Activated CD4-positive, alpha-beta memory T cell treated with anti-CD3 and anti-CD28 coated beads for 36 hours (primary cell): ENCODE measurements at regions of chr12 and their contacts with region 1.

Region 1: DNA sequence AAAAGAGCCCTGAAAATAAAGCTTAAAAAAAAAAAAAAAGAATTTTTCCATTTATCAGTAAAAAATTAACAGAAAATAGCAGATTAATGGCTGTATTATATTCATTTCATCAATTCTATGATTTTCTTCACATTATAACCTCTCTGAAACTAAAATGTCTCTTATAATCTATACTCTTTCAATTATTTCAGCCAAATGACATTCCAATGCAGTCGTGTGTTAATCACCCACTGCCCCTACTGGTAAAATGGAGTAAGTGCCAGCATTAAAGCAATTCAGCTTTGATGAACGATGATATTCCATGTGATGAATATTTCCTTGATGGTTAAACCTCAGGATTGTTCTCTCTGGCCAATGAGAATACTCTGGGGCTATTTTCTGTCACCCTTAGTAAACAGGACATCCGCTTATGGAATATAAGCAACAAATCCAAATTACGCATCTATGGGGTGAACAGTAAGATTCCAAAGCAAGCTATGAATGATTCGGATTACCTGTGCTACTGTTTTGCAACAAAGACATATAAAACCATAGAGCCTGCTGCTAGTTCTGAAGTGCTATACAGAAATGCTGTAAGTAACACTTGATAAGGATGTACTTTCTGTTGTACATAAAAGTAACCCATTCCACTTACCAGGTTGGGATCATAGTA is 20.3 kb upstream of the SYCP3 start:
- DNase-seq: no peak
- H3K4me3 Mint-ChIP-seq: no peak overlapping the region
- H3K27ac Mint-ChIP-seq: no peak overlapping the region
- H3K4me1 Mint-ChIP-seq: no peaks in the 10 kb centered on the region
- H3K27me3 Mint-ChIP-seq: no peaks in the 10 kb centered on the region

Region 2: GRCh38 chr12:101414533-101415119 is 344.9 kb before region 1 on chr12:
- CTCF ChIA-PET with region 1: interaction called, 18 read pairs
- POLR2A ChIA-PET with region 1: no interaction called
- intact Hi-C with region 1: loop called (anchors 1 kb)
- DNase-seq: no peak
- H3K4me3 Mint-ChIP-seq: no peak overlapping the region
- H3K27ac Mint-ChIP-seq: no peak overlapping the region
- H3K4me1 Mint-ChIP-seq: no peaks in the 10 kb centered on the region
- H3K27me3 Mint-ChIP-seq: no peaks in the 10 kb centered on the region

Region 3: GRCh38 chr12:101490286-101490920 is 269.1 kb before region 1 on chr12:
- CTCF ChIA-PET with region 1: interaction called, 3 read pairs
- POLR2A ChIA-PET with region 1: no interaction called
- intact Hi-C with region 1: loop called (anchors 5 kb)
- DNase-seq: peak; percentile 18
- H3K4me3 Mint-ChIP-seq: no peak overlapping the region
- H3K27ac Mint-ChIP-seq: no peak overlapping the region
- H3K4me1 Mint-ChIP-seq: no peaks in the 10 kb centered on the region
- H3K27me3 Mint-ChIP-seq: no peaks in the 10 kb centered on the region

Region 4: DNA sequence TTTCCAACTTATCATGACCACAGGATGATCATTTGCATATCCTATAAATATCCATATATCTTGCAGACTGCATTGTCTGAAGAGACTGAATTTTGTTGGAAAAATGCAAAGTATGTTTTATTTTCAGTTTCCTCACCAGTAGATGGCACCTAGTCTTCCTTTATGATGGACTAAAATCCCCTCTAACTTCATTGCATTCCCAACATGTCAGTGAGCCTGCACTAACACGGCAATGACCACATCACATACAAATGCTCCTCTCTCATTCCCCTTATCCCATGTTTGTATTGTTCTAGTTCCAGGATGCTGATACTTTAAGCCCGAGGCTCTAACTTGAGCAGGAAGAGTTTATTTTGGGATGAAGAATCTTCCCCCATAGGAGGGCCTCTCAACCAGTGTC is 189.5 kb before region 1 on chr12:
- CTCF ChIA-PET with region 1: interaction called, 3 read pairs
- POLR2A ChIA-PET with region 1: no interaction called
- intact Hi-C with region 1: loop called (anchors 10 kb)
- DNase-seq: no peak
- H3K4me3 Mint-ChIP-seq: no peak overlapping the region
- H3K27ac Mint-ChIP-seq: no peak overlapping the region
- H3K4me1 Mint-ChIP-seq: peaks cover 4% of the 10 kb centered on the region
- H3K27me3 Mint-ChIP-seq: peaks cover 4% of the 10 kb centered on the region

Region 5: GRCh38 chr12:101670007-101670687 is 89.4 kb before region 1 on chr12:
- CTCF ChIA-PET with region 1: interaction called, 6 read pairs
- POLR2A ChIA-PET with region 1: no interaction called
- intact Hi-C with region 1: loop called (anchors 1 kb)
- DNase-seq: peak; percentile 64
- H3K4me3 Mint-ChIP-seq: no peak overlapping the region
- H3K27ac Mint-ChIP-seq: no peak overlapping the region
- H3K4me1 Mint-ChIP-seq: peaks cover 17% of the 10 kb centered on the region
- H3K27me3 Mint-ChIP-seq: peaks cover 9% of the 10 kb centered on the region

Region 6: GRCh38 chr12:101773650-101774162 is 14.2 kb after region 1 on chr12:
- CTCF ChIA-PET with region 1: interaction called, 12 read pairs
- POLR2A ChIA-PET with region 1: no interaction called
- intact Hi-C with region 1: no loop called
- DNase-seq: peak; percentile 72
- H3K4me3 Mint-ChIP-seq: no peak overlapping the region
- H3K27ac Mint-ChIP-seq: no peak overlapping the region
- H3K4me1 Mint-ChIP-seq: peaks cover 6% of the 10 kb centered on the region
- H3K27me3 Mint-ChIP-seq: no peaks in the 10 kb centered on the region

Region 7: DNA sequence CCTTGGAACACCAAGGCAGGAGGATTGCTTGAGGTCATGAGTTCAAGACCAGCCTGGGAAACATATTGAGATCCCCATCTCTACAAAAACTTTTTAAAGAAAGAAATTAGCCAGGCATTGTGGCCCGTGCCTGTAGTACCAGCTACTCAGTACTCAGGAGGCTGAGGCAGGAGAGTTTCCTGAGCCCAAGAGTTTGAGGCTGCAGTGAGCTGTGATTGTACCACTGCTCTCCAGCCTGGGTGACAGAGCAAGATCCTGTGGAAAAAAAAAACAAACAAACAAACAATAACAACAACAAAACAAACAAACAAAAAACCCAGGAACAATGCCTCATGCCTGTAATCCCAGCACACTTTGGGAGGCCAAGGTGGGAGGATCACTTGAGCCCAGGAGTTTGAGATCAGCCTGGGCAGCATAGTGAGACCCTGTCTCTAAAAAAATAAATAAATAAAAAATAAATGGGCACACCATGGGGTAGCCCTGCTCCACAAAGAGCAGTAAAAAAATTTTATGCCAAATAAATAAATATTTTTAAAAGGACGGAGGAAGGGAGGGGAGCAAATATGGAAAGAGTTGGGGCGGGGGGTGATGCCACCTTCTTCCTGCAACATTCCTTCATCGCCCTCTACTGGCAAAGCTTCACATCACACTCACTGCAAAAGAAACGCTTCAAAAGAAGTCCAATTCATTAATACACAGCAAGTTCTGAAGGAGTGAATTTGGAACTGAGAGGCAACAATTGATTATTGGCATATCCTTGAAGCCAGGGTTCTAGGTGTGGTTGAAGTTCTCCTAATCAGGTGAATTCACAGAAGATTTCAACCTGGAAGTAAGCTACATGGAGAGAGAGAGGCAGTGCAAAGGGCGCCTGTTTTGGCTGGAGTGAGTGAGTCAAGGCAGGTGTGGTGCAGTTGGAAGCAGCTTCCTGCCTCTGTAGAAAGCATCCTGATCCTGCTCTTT is 80.1 kb after region 1 on chr12:
- CTCF ChIA-PET with region 1: interaction called, 23 read pairs
- POLR2A ChIA-PET with region 1: no interaction called
- intact Hi-C with region 1: no loop called
- DNase-seq: peak; percentile 74
- H3K4me3 Mint-ChIP-seq: no peak overlapping the region
- H3K27ac Mint-ChIP-seq: no peak overlapping the region
- H3K4me1 Mint-ChIP-seq: peaks cover 10% of the 10 kb centered on the region
- H3K27me3 Mint-ChIP-seq: no peaks in the 10 kb centered on the region

Region 8: DNA sequence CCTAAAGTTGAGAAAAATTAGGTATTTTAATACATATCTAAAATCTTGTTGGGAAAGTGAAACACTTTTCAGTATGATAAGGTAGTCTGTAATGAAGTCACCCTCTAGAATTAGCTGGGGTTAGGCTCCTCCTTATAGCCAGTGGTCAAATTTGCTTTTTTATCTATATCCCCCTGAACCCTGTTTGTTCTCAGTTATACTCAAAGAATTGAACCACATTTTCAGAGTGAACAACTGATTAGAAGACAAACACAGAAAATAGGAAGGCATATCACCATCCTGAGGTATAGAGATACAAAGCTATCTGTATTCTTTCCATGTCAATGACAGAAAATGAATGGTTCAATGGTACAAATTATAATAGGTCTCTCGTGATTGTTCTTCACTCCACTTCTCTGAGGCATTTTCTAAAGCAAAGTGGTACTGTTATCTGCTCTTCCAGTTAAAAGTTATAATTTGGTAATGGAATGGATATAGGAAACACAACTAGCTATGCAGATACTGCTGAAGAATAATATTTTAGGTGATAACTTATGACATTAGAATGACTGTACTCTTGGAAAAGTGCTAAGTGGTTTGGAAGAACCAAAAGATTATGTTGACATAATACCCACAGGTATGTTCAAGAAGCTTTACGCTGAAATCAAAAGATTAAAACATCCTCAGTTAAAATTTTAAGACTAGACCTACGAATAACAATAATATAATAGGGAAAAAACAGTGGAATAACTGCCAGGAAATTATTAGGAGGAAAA is 274.6 kb after region 1 on chr12:
- CTCF ChIA-PET with region 1: no interaction called
- POLR2A ChIA-PET with region 1: no interaction called
- intact Hi-C with region 1: no loop called
- DNase-seq: no peak
- H3K4me3 Mint-ChIP-seq: no peak overlapping the region
- H3K27ac Mint-ChIP-seq: no peak overlapping the region
- H3K4me1 Mint-ChIP-seq: no peaks in the 10 kb centered on the region
- H3K27me3 Mint-ChIP-seq: no peaks in the 10 kb centered on the region